HEK293 (cell line): ENCODE measurements at regions of chr20 and their contacts with region 1.

Region 1: DNA sequence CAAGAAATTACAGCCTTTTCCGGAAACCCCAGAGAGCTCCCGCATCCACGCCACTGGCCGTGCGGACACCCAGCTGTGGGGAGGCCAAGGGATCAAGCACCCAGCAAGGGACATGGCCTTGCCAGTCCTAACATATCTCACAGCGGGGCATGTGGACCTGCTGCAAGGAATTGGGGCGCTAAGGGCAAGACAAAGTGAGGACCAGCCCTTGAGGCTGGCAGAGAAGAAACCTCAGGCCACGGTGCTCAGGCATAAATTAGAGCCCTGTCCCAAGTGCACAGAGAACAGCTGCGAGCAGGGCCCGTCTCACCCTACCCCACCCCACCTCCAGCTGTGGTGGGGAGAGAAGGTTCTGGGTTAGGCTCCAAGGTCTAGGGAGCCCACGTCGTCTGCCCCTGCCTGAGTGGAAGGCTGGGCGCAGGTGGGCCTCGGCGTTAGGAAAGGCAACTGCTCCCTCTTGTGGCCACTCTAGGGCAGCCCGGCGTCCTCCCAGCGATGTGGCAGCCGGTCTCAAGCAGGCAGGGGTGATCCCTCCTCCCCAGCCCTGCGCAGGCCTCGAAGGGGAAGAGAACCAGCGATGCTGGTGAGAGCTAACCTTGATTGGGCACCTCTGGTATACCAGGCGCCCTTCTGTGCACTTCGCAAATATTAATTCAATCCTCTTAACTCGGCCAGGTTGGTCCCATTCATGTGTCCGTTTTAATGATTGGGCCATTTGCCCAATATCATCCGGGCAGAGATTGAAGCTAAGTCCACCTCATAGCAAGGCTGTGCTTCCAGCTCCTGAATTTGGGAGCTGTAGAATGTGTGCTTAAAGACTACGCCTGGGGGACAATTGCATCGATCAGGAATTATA is 235.8 kb downstream of the NFATC2 start:
- H3K4me3 ChIP-seq: no peak overlapping the region
- H3K27ac ChIP-seq: no peak overlapping the region
- H3K4me1 ChIP-seq: no peaks in the 10 kb centered on the region
- CTCF ChIP-seq: peak; percentile 92

Region 2: GRCh38 chr20:50987592-50988210 is 319.0 kb before region 1 on chr20:
- CTCF ChIA-PET with region 1: interaction called, 243 read pairs
- POLR2A ChIA-PET with region 1: no interaction called
- H3K4me3 ChIP-seq: no peak overlapping the region
- H3K27ac ChIP-seq: no peak overlapping the region
- H3K4me1 ChIP-seq: no peaks in the 10 kb centered on the region
- CTCF ChIP-seq: peak; percentile 80

Region 3: DNA sequence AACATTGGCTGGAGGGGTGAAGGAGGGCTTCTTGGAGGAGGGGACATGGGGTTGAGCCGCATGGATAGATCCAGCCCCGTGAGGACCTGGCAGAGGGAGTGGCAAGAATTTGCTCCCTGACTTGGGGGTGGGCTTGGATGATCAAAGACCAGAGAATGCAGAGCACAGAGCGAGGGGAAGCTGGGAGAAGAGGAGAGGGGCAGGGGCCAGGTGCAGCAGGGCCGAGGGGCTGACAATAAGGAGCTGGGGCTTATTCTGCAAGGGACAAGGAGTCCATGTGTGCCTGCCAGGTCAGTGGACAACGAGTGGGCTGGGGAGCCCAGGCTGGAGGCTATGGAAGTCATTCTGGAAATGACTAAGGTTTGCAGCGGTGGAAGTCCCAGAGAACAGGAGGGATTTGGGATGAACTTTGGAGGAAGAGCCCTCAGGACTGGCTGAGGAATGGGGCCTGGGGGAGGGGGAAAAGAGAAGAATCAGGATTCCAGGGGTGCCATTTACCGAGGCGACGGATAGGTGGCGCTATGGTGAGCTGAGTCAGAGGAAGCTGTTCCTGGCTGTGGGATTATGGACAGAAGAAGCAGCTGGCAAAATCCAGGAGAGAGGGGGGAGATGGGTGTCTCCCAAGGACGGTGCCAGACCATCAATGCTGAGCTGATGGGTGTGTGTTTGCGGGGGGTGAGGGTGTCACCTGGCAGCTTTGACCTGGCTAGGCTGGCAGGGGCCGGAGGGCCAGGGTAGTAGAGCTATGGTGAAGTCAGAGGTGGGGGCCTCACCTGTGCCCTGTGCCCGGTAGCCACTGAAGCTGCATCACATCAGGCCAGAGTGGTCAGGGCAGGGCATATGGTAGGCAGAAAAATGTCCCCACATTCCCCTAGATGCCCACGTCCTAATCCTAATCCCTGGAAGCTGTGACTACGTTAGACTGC is 291.7 kb before region 1 on chr20:
- CTCF ChIA-PET with region 1: interaction called, 15 read pairs
- POLR2A ChIA-PET with region 1: interaction called, 8 read pairs
- H3K4me3 ChIP-seq: no peak overlapping the region
- H3K27ac ChIP-seq: no peak overlapping the region
- H3K4me1 ChIP-seq: no peaks in the 10 kb centered on the region
- CTCF ChIP-seq: peak; percentile 77

Region 4: DNA sequence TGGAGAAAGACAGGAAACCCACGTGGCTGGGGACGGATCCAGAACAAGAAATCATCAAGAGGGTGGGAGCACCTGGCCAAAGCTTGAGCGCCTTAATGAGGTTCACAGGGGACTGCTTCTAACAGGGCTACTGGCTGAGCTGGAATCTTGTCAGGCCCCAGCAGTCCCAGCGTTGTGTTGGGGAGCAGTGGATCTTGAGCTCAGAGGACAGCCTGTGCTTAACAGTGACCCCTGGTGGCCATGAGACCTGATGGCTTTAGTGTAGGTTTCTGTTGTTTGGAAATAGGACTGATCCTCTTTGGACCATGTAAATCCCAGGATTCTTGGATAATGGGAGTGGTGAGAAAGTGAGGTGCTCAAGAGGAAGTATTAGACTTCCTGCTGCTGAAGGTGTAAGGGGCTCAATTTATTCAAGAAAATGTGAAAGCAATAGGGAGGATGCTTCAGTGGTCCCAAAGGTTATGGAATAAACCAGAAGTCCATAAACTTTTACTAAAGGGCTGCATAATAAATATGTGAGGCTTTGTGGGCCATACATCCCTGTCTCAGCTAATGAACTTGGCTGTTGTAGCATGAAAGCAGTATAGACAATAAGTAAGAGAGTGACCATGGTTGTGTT is 19.6 kb after region 1 on chr20:
- CTCF ChIA-PET with region 1: interaction called, 39 read pairs
- POLR2A ChIA-PET with region 1: no interaction called
- H3K4me3 ChIP-seq: no peak overlapping the region
- H3K27ac ChIP-seq: no peak overlapping the region
- H3K4me1 ChIP-seq: no peaks in the 10 kb centered on the region
- CTCF ChIP-seq: no peak

Region 5: GRCh38 chr20:51372176-51372803 is 65.6 kb after region 1 on chr20:
- CTCF ChIA-PET with region 1: interaction called, 12 read pairs
- POLR2A ChIA-PET with region 1: no interaction called
- H3K4me3 ChIP-seq: no peak overlapping the region
- H3K27ac ChIP-seq: no peak overlapping the region
- H3K4me1 ChIP-seq: no peaks in the 10 kb centered on the region
- CTCF ChIP-seq: peak; percentile 79

Region 6: GRCh38 chr20:51385646-51386530 is 79.2 kb after region 1 on chr20:
- CTCF ChIA-PET with region 1: no interaction called
- POLR2A ChIA-PET with region 1: no interaction called
- H3K4me3 ChIP-seq: no peak overlapping the region
- H3K27ac ChIP-seq: no peak overlapping the region
- H3K4me1 ChIP-seq: no peaks in the 10 kb centered on the region; the same call in 1 of the 2 replicates
- CTCF ChIP-seq: peak; percentile 24; the same call in 1 of the 2 replicates